ENCODE measurements at regions of chr7 and their contacts with region 1.

Region 1: DNA sequence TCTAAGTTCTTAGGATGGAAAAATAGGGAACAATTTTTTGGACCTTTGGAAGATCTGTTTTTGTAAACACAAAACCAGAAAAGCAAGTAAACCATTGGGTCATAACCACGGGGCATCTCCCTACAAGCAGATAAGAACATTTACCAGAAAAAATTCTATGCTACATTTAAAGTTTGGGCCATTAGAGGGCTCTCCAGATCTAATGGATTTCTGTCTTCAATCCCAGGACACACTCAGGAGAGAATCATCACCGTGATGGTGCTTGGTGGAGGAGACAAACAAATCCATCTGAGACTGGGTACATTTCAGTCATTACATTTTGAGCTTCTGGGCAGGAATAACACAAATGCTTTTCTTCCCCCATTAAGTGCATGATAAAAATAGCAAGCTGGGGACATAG is 178.4 kb upstream of the TARP start:
- DNase-seq: no peak
- H3K4me3 Mint-ChIP-seq: no peak overlapping the region
- H3K27ac Mint-ChIP-seq: no peak overlapping the region
- H3K4me1 Mint-ChIP-seq: no peaks in the 10 kb centered on the region
- H3K27me3 Mint-ChIP-seq: no peaks in the 10 kb centered on the region

Region 2: GRCh38 chr7:38424750-38425463 is 26.9 kb before region 1 on chr7:
- CTCF ChIA-PET with region 1: no interaction called
- intact Hi-C with region 1: no loop called
- DNase-seq: no peak
- H3K4me3 Mint-ChIP-seq: no peak overlapping the region
- H3K27ac Mint-ChIP-seq: no peak overlapping the region
- H3K4me1 Mint-ChIP-seq: peaks cover 52% of the 10 kb centered on the region
- H3K27me3 Mint-ChIP-seq: no peaks in the 10 kb centered on the region

Region 3: DNA sequence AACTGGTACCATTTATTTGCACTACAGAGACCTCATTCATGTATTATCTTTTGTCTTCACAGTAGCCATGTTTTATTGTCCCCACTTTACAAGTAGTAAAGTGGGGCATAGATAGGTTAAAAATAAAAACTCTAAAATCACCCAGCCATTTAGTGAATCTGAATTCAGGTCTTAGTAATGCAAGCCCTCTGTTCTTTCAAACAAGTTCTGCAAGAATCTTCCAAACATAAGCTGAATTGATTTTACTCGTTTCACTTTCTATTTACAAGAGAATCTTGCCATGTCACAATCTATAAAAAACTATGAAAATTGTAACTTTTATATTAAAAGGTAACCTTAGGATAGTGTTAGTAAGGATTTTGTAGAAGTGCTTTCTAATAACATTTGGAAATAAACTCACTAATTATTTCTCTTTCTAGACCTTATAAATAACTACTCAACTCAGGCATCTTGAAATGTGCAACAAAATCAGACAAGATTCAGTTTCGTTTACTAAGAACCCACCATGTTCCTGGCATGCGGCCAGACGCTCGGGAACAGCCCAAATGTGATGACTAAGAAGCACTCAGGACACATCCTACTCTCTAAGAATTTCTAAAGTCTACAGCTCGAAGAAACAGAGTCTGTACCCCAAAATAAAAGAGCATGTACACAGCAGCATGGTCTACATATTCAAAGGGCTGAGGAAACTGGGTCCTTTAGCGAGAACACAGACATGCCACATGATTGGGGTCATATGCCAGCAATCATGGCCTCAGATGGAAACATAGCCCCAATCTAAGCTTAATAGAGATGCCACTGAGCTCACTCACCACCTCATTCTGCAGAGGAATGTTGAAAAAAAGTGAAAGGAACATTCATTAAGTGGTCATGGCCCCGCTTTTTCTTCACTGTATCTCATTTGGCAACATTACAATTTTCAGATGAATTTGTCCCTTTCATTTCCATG is 11.7 kb after region 1 on chr7:
- CTCF ChIA-PET with region 1: no interaction called
- intact Hi-C with region 1: loop called (anchors 1 kb)
- DNase-seq: peak; percentile 90
- H3K4me3 Mint-ChIP-seq: no peak overlapping the region
- H3K27ac Mint-ChIP-seq: peak overlapping the region; percentile 30
- H3K4me1 Mint-ChIP-seq: peaks cover 19% of the 10 kb centered on the region
- H3K27me3 Mint-ChIP-seq: no peaks in the 10 kb centered on the region

Region 4: GRCh38 chr7:38630720-38631673 is 179.2 kb after region 1 on chr7 and contains the start of gene AMPH:
- CTCF ChIA-PET with region 1: interaction called, 5 read pairs
- intact Hi-C with region 1: loop called (anchors 1 kb)
- DNase-seq: peak; percentile 31
- H3K4me3 Mint-ChIP-seq: peak within 1 kb of the TSS; percentile 64
- H3K27ac Mint-ChIP-seq: no peak within 1 kb of the TSS
- H3K4me1 Mint-ChIP-seq: peaks cover 11% of the 10 kb centered on the region
- H3K27me3 Mint-ChIP-seq: peaks cover 45% of the 10 kb centered on the region
- total RNA-seq, gene AMPH: 0.07 TPM in 1 of 2 experiments, not detected in the other

Region 5: GRCh38 chr7:38660427-38661099 is 208.7 kb after region 1 on chr7:
- CTCF ChIA-PET with region 1: no interaction called
- intact Hi-C with region 1: loop called (anchors 2 kb)
- DNase-seq: peak; percentile 43
- H3K4me3 Mint-ChIP-seq: no peak overlapping the region
- H3K27ac Mint-ChIP-seq: no peak overlapping the region
- H3K4me1 Mint-ChIP-seq: no peaks in the 10 kb centered on the region
- H3K27me3 Mint-ChIP-seq: peaks cover 13% of the 10 kb centered on the region